MCF 10A (cell line): ENCODE measurements at regions of chr20 and their contacts with region 1.

Region 1: GRCh38 chr20:21235484-21236445 is 67.4 kb upstream of the XRN2 start:
- DNase-seq: peak; percentile 72
- H3K4me3 Mint-ChIP-seq: no peak overlapping the region
- H3K27ac Mint-ChIP-seq: no peak overlapping the region
- H3K4me1 Mint-ChIP-seq: peaks cover 5% of the 10 kb centered on the region
- H3K27me3 Mint-ChIP-seq: no peaks in the 10 kb centered on the region
- CTCF ChIP-seq: peak; percentile 75

Region 2: GRCh38 chr20:20872428-20872827 is 363.3 kb before region 1 on chr20:
- CTCF ChIA-PET with region 1: interaction called, 226 read pairs
- POLR2A ChIA-PET with region 1: no interaction called
- intact Hi-C with region 1: no loop called
- DNase-seq: no peak
- H3K4me3 Mint-ChIP-seq: no peak overlapping the region
- H3K27ac Mint-ChIP-seq: no peak overlapping the region
- H3K4me1 Mint-ChIP-seq: no peaks in the 10 kb centered on the region
- H3K27me3 Mint-ChIP-seq: peaks cover 52% of the 10 kb centered on the region
- CTCF ChIP-seq: no peak

Region 3: GRCh38 chr20:21214431-21214830 is 21.3 kb before region 1 on chr20:
- CTCF ChIA-PET with region 1: interaction called, 136 read pairs
- POLR2A ChIA-PET with region 1: no interaction called
- intact Hi-C with region 1: no loop called
- DNase-seq: peak; percentile 1
- H3K4me3 Mint-ChIP-seq: no peak overlapping the region
- H3K27ac Mint-ChIP-seq: no peak overlapping the region
- H3K4me1 Mint-ChIP-seq: no peaks in the 10 kb centered on the region
- H3K27me3 Mint-ChIP-seq: no peaks in the 10 kb centered on the region
- CTCF ChIP-seq: no peak

Region 4: GRCh38 chr20:21315138-21315537 is 79.4 kb after region 1 on chr20:
- CTCF ChIA-PET with region 1: interaction called, 19 read pairs
- POLR2A ChIA-PET with region 1: no interaction called
- intact Hi-C with region 1: no loop called
- DNase-seq: peak; percentile 54
- H3K4me3 Mint-ChIP-seq: no peak overlapping the region
- H3K27ac Mint-ChIP-seq: no peak overlapping the region
- H3K4me1 Mint-ChIP-seq: peaks cover 25% of the 10 kb centered on the region
- H3K27me3 Mint-ChIP-seq: no peaks in the 10 kb centered on the region
- CTCF ChIP-seq: no peak

Region 5: GRCh38 chr20:21380711-21381110 is 144.9 kb after region 1 on chr20:
- CTCF ChIA-PET with region 1: interaction called, 14 read pairs
- POLR2A ChIA-PET with region 1: interaction called, 3 read pairs
- intact Hi-C with region 1: no loop called
- DNase-seq: no peak
- H3K4me3 Mint-ChIP-seq: no peak overlapping the region
- H3K27ac Mint-ChIP-seq: no peak overlapping the region
- H3K4me1 Mint-ChIP-seq: peaks cover 5% of the 10 kb centered on the region
- H3K27me3 Mint-ChIP-seq: no peaks in the 10 kb centered on the region
- CTCF ChIP-seq: no peak

Region 6: DNA sequence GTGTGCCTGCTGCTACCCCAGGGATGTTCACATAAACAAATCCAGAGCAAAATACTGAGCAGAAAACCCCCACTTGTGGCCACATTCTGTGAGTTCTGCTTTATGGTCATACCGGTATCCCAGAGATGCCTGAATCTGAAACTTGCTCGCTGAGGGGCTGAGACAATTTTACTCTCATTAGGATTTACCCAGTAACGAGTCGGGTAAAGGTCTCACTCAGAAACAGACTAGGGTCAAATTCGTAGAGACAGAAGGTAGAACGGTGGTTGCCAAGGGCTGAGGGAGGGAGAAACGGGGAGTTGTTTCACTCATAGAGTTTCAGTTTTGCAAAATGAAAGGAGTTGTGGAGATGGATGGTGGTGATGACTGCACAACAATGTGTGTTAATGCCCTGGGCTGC is 323.5 kb after region 1 on chr20:
- CTCF ChIA-PET with region 1: interaction called, 17 read pairs
- POLR2A ChIA-PET with region 1: no interaction called
- intact Hi-C with region 1: no loop called
- DNase-seq: no peak
- H3K4me3 Mint-ChIP-seq: no peak overlapping the region
- H3K27ac Mint-ChIP-seq: no peak overlapping the region
- H3K4me1 Mint-ChIP-seq: peaks cover 4% of the 10 kb centered on the region
- H3K27me3 Mint-ChIP-seq: peaks cover 52% of the 10 kb centered on the region
- CTCF ChIP-seq: no peak